CD14-positive monocyte (primary cell): ENCODE measurements at regions of chr4 and their contacts with region 1.

Region 1: GRCh38 chr4:106369456-106370060 is 980 bp upstream of the GIMD1 start:
- DNase-seq: peak; percentile 14 to 49 (median 42)
- H3K4me3 ChIP-seq: no peak overlapping the region
- H3K4me3 Mint-ChIP-seq: no peak overlapping the region
- H3K27ac ChIP-seq: no peak overlapping the region
- H3K27ac Mint-ChIP-seq: no peak overlapping the region
- H3K4me1 ChIP-seq: peaks cover 8 to 12% of the 10 kb centered on the region in 2 donors
- H3K4me1 Mint-ChIP-seq: peaks cover 21% of the 10 kb centered on the region
- H3K27me3 ChIP-seq: no peaks in the 10 kb centered on the region
- H3K27me3 Mint-ChIP-seq: peaks cover 0 to 2% (median 0%) of the 10 kb centered on the region in 3 donors
- CTCF ChIP-seq: peak; percentile 72

Region 2: GRCh38 chr4:106273831-106274230 is 95.7 kb before region 1 on chr4:
- intact Hi-C with region 1: no loop called
- DNase-seq: no peak
- H3K4me3 ChIP-seq: no peak overlapping the region
- H3K4me3 Mint-ChIP-seq: no peak overlapping the region
- H3K27ac ChIP-seq: no peak overlapping the region
- H3K27ac Mint-ChIP-seq: no peak overlapping the region
- H3K4me1 ChIP-seq: no peaks in the 10 kb centered on the region
- H3K4me1 Mint-ChIP-seq: no peaks in the 10 kb centered on the region
- H3K27me3 ChIP-seq: no peaks in the 10 kb centered on the region
- H3K27me3 Mint-ChIP-seq: no peaks in the 10 kb centered on the region
- CTCF ChIP-seq: no peak

Region 3: DNA sequence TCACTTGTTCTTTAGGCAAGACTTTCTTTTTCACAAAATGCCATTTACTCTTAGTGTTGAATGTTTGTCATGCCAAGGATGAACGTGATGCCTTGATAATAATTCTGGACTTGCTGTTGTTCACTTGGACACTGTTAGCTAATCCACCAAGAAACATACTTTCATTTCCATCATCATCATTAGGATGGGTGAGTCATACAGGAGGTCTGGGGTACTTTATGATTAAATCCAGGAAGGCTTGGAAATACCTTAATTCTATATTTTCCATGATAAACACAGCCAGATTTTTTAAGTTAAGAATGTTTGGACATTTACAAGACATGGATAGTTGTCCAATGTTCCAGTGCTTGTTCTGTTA is 259.7 kb after region 1 on chr4:
- intact Hi-C with region 1: no loop called
- DNase-seq: no peak
- H3K4me3 ChIP-seq: no peak overlapping the region
- H3K4me3 Mint-ChIP-seq: no peak overlapping the region
- H3K27ac ChIP-seq: no peak overlapping the region
- H3K27ac Mint-ChIP-seq: no peak overlapping the region
- H3K4me1 ChIP-seq: no peaks in the 10 kb centered on the region
- H3K4me1 Mint-ChIP-seq: no peaks in the 10 kb centered on the region
- H3K27me3 ChIP-seq: no peaks in the 10 kb centered on the region
- H3K27me3 Mint-ChIP-seq: peaks cover 0 to 4% (median 0%) of the 10 kb centered on the region in 3 donors
- CTCF ChIP-seq: no peak

Region 4: DNA sequence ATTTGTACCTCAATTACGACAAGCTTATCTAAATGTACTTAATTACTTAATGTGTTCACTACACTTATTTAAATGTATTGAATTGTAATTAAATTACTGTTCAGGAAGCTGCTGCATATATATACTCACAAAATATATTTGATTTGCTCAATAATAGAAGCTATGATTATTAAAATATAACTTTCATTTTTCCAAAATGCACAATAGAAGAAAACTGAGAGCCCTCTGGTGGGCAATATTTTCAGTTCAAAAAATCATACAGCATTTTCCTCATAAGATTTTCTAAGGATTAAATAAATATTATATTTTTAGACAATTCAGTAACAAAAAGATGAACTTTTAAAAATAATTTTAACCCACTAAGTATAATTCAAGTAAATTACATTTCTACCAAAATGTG is 449.2 kb after region 1 on chr4:
- intact Hi-C with region 1: loop called in 1 of 2 experiments (anchors 10 kb)
- DNase-seq: no peak
- H3K4me3 ChIP-seq: no peak overlapping the region
- H3K4me3 Mint-ChIP-seq: no peak overlapping the region
- H3K27ac ChIP-seq: no peak overlapping the region
- H3K27ac Mint-ChIP-seq: no peak overlapping the region
- H3K4me1 ChIP-seq: no peaks in the 10 kb centered on the region
- H3K4me1 Mint-ChIP-seq: no peaks in the 10 kb centered on the region
- H3K27me3 ChIP-seq: no peaks in the 10 kb centered on the region
- H3K27me3 Mint-ChIP-seq: peaks cover 2 to 5% (median 4%) of the 10 kb centered on the region in 3 donors
- CTCF ChIP-seq: no peak